CD4-positive, alpha-beta T cell (primary cell): ENCODE measurements at regions of chr2 and their contacts with region 1.

Region 1: DNA sequence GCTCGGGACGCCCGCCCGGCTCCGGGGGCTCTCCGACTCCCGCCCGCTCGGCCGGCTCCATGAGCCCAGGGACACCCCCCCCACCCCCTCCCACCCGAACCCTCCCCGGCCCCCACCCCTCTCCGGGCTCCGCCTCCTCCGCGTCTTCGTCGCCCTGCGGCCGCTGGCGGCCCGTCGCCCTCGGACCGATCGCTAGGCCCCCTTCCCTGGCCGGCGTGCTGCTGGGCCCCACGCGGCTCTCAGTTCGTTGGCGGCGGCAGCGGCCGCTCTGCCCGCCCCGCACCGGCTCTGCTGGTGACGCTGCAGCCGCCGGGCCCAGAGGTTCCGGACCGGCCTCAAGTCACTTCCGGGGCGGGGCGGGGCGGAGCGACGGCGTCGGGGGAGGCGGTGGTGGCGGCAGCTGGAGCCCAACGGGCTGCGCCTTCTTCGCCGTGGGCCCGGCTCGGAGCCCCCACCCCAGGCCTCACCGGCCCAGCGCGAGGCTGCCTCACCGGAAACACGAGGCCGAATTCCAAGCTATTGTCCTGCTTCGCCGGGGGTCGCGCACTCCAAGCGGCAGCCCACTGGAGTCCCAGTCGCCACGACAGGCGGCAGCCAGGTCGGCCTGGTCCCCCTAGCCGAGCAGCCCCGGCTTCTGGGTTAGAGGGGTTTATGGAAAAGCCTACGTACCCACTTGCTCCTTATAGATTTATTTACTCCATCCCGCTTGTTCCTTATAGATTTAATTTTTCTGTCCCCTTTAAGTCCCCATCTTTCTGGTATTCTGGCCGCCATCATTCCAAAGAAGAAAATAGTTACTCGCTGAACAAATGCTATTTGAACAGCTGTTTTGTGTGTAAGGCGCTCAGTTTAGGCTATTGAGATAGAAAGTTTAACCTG is at the start of gene PSME4:
- DNase-seq: peak; percentile 85 to 98 (median 94)
- ATAC-seq: peak; percentile 88
- H3K4me3 ChIP-seq: peak within 1 kb of the TSS; percentile 79
- H3K4me3 Mint-ChIP-seq: peak within 1 kb of the TSS; percentile 98
- H3K27ac ChIP-seq: peak within 1 kb of the TSS; percentile 81 to 82
- H3K27ac Mint-ChIP-seq: peak within 1 kb of the TSS; percentile 90
- H3K4me1 ChIP-seq: peaks cover 43% of the 10 kb centered on the region
- H3K4me1 Mint-ChIP-seq: peaks cover 58% of the 10 kb centered on the region
- H3K27me3 ChIP-seq: no peaks in the 10 kb centered on the region
- H3K27me3 Mint-ChIP-seq: no peaks in the 10 kb centered on the region
- CTCF ChIP-seq: no peak
- total RNA-seq, gene PSME4: 82.6 to 87.0 TPM

Region 2: GRCh38 chr2:53786705-53787612 is 184.0 kb before region 1 on chr2 and contains the starts of genes ASB3 and ERLEC1:
- CTCF ChIA-PET with region 1: no interaction called
- POLR2A ChIA-PET with region 1: no interaction called
- intact Hi-C with region 1: loop called in 1 of 2 experiments (anchors 10 kb)
- DNase-seq: peak; percentile 73 to 93 (median 84)
- ATAC-seq: peak; percentile 87
- H3K4me3 ChIP-seq: peak within 1 kb of the TSS; percentile 83
- H3K4me3 Mint-ChIP-seq: peak within 1 kb of the TSS; percentile 97
- H3K27ac ChIP-seq: peak within 1 kb of the TSS; percentile 79 to 87
- H3K27ac Mint-ChIP-seq: peak within 1 kb of the TSS; percentile 86
- H3K4me1 ChIP-seq: peaks cover 32% of the 10 kb centered on the region
- H3K4me1 Mint-ChIP-seq: peaks cover 59% of the 10 kb centered on the region
- H3K27me3 ChIP-seq: no peaks in the 10 kb centered on the region
- H3K27me3 Mint-ChIP-seq: no peaks in the 10 kb centered on the region
- CTCF ChIP-seq: no peak
- total RNA-seq, gene ASB3: 31.0 to 34.3 TPM
- total RNA-seq, gene ERLEC1: 14.5 to 14.7 TPM

Region 3: DNA sequence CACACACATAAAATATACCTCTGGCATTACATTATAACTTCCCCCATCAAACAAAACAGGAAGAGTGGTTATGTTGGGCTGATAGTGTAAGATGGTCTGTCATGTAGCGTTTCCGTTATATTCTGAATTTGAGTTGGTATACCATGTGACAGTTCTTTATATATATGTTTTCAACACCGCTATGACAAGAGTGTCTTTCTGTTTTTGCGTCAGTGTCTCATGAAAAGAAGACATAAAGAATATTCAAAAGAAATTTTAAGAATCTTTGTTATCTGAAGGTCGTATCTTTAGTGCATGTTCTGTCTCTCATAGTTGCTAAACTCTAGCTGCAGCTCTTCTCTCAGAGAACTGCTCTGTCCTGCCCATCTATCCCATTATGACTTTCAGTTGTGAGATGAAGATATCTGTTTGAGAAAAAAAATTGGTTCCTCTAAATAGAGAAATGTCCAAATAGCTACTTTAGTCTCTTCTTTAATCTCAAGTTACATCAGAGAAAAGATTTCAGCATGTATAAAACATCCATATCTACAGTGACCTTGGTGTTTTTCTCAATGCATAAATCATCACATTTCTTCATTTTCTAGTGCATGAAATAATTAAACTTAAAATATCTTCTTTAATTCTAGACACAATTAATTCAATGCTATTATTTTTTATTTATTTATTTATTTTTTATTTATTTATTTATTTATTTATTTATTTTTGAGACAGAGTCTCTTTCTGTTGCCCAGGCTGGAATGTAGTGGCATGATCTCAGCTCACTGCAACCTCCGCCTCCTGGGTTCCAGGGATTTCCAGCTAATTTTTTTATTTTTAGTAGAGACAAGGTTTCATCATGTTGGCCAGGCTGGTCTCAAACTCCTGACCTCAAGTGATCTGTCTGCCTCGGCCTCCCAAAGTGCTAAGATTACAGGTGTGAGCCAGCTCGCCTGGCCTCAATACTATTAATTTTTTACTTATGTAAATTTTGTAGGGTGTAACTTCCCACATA is 24.1 kb after region 1 on chr2:
- CTCF ChIA-PET with region 1: no interaction called
- POLR2A ChIA-PET with region 1: interaction called, 49 read pairs
- intact Hi-C with region 1: loop called in 1 of 2 experiments (anchors 1 kb)
- DNase-seq: peak in 3 of 14 experiments; percentile 76 to 88 (median 78)
- ATAC-seq: peak; percentile 93
- H3K4me3 ChIP-seq: peak overlapping the region; percentile 28
- H3K4me3 Mint-ChIP-seq: peak overlapping the region; percentile 59
- H3K27ac ChIP-seq: peak overlapping the region; percentile 69 to 73
- H3K27ac Mint-ChIP-seq: peak overlapping the region; percentile 89
- H3K4me1 ChIP-seq: peaks cover 43% of the 10 kb centered on the region
- H3K4me1 Mint-ChIP-seq: peaks cover 25% of the 10 kb centered on the region
- H3K27me3 ChIP-seq: no peaks in the 10 kb centered on the region
- H3K27me3 Mint-ChIP-seq: no peaks in the 10 kb centered on the region
- CTCF ChIP-seq: no peak

Region 4: GRCh38 chr2:54015798-54016699 is 45.1 kb after region 1 on chr2:
- CTCF ChIA-PET with region 1: no interaction called
- POLR2A ChIA-PET with region 1: interaction called, 15 read pairs
- intact Hi-C with region 1: loop called (anchors 2 to 5 kb)
- DNase-seq: no peak
- ATAC-seq: no peak
- H3K4me3 ChIP-seq: no peak overlapping the region
- H3K4me3 Mint-ChIP-seq: no peak overlapping the region
- H3K27ac ChIP-seq: no peak overlapping the region
- H3K27ac Mint-ChIP-seq: peak overlapping the region; percentile 75
- H3K4me1 ChIP-seq: peaks cover 33% of the 10 kb centered on the region
- H3K4me1 Mint-ChIP-seq: peaks cover 46% of the 10 kb centered on the region
- H3K27me3 ChIP-seq: no peaks in the 10 kb centered on the region
- H3K27me3 Mint-ChIP-seq: no peaks in the 10 kb centered on the region
- CTCF ChIP-seq: no peak

Region 5: DNA sequence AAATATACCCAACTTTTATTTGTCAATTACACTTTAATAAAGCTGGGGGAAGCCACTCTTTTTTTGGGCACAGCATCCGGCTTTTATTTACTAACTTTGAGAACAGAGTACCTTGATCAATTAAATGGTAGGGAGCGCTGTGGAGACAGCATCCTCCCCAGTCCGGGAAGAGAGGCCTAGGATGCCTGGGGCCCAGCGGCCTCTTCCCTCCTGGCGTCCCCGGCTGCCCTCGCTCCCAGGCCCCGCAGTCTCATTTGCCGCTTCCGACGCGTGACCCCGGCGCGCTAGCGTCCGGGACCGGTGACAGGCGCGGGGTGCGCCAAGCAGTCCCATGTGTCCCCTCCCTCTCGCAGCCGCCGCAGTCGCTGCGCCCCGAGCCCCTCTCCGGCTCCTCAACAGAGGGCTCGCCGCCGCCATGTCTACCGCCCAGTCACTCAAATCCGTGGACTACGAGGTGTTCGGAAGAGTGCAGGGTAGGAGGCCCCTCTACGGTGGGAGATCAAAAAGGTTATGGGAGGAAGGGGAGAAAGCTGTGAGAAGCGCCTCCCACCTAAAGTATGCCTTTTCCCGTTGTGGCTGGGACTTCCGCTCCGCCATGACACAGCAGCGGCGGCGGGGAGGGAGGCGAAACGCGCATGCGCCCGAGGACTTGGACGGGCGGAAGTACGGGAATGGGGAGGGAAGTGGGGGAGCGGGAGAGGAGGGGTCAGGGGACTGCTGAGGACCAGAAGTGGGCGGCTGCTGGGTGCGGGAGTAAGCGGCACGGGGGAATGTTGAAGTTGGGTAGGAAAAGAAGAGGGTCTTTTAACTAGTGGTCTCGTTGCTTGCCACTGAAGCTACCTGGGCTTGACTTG is 144.5 kb after region 1 on chr2 and contains the start of gene ACYP2:
- CTCF ChIA-PET with region 1: no interaction called
- POLR2A ChIA-PET with region 1: interaction called, 36 read pairs
- intact Hi-C with region 1: loop called (anchors 1 to 5 kb)
- DNase-seq: peak; percentile 79 to 96 (median 90)
- ATAC-seq: peak; percentile 78
- H3K4me3 ChIP-seq: peak within 1 kb of the TSS; percentile 86
- H3K4me3 Mint-ChIP-seq: peak within 1 kb of the TSS; percentile 92
- H3K27ac ChIP-seq: peak within 1 kb of the TSS; percentile 96 to 98
- H3K27ac Mint-ChIP-seq: peak within 1 kb of the TSS; percentile 99
- H3K4me1 ChIP-seq: peaks cover 11% of the 10 kb centered on the region
- H3K4me1 Mint-ChIP-seq: peaks cover 16% of the 10 kb centered on the region
- H3K27me3 ChIP-seq: no peaks in the 10 kb centered on the region
- H3K27me3 Mint-ChIP-seq: no peaks in the 10 kb centered on the region
- CTCF ChIP-seq: peak; percentile 17
- total RNA-seq, gene ACYP2: 9.3 to 10.9 TPM

Region 6: GRCh38 chr2:54240515-54241469 is 269.8 kb after region 1 on chr2:
- CTCF ChIA-PET with region 1: no interaction called
- POLR2A ChIA-PET with region 1: no interaction called
- intact Hi-C with region 1: no loop called
- DNase-seq: no peak
- ATAC-seq: no peak
- H3K4me3 ChIP-seq: no peak overlapping the region
- H3K4me3 Mint-ChIP-seq: no peak overlapping the region
- H3K27ac ChIP-seq: no peak overlapping the region
- H3K27ac Mint-ChIP-seq: no peak overlapping the region
- H3K4me1 ChIP-seq: no peaks in the 10 kb centered on the region
- H3K4me1 Mint-ChIP-seq: no peaks in the 10 kb centered on the region
- H3K27me3 ChIP-seq: no peaks in the 10 kb centered on the region
- H3K27me3 Mint-ChIP-seq: no peaks in the 10 kb centered on the region
- CTCF ChIP-seq: no peak

Region 7: GRCh38 chr2:54455563-54456361 is 484.8 kb after region 1 on chr2 and contains the start of gene SPTBN1:
- CTCF ChIA-PET with region 1: no interaction called
- POLR2A ChIA-PET with region 1: no interaction called
- intact Hi-C with region 1: no loop called
- DNase-seq: peak in 5 of 14 experiments; percentile 5 to 33 (median 19)
- ATAC-seq: peak; percentile 54
- H3K4me3 ChIP-seq: peak within 1 kb of the TSS; percentile 28
- H3K4me3 Mint-ChIP-seq: peak within 1 kb of the TSS; percentile 69
- H3K27ac ChIP-seq: no peak within 1 kb of the TSS
- H3K27ac Mint-ChIP-seq: no peak within 1 kb of the TSS
- H3K4me1 ChIP-seq: peaks cover 17% of the 10 kb centered on the region
- H3K4me1 Mint-ChIP-seq: peaks cover 22% of the 10 kb centered on the region
- H3K27me3 ChIP-seq: peaks cover 34 to 59% of the 10 kb centered on the region in 2 experiments
- H3K27me3 Mint-ChIP-seq: peaks cover 55% of the 10 kb centered on the region
- CTCF ChIP-seq: no peak
- total RNA-seq, gene SPTBN1: 156 to 166 TPM